CD4-positive, alpha-beta memory T cell (primary cell): ENCODE measurements at regions of chr10 and their contacts with region 1.

Region 1: DNA sequence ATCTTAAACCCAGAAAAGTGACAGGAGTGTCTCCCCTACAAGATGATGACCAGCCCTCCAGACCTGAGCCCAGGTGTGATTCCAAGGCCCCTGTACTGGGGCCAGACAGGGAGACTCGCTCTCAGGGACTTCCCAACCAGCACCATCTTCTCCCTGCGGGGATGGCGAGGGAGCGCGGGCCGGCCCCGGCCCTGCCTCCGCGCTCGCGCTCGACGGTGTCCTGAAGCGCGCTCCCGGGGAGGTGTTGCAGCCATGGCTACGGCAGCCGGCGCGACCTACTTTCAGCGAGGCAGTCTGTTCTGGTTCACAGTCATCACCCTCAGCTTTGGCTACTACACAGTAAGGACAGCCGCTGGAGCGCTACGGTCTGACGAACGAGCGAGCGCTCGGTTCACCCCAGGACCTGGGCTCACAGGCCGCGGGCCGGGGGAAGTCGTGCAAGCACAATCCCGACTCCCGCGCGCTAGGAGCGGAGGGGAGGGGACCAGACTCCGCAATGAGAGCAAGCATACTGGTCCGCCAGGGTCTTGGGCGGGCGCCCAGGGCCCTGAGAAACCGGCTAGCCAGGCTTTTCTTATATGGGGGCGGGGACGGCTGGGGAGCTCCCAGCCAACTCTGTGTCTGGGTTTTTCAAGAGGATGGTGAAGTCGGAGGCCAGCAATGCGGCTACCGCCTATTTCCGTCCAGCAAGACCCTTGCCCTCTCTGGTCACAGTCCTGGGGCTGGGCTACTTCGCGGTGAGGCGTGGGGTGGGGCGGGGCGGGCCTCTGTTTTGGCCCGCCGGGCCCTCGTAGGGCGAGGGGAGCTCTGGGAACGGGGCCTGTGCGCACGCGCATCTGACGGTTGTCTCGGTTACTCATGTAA is at the start of gene TMEM254:
- DNase-seq: peak; percentile 83 to 85 (median 85)
- H3K4me3 ChIP-seq: peak within 1 kb of the TSS; percentile 76 to 86
- H3K4me3 Mint-ChIP-seq: peak within 1 kb of the TSS; percentile 92 to 98 (median 96)
- H3K27ac ChIP-seq: peak within 1 kb of the TSS; percentile 83
- H3K27ac Mint-ChIP-seq: peak within 1 kb of the TSS; percentile 85 to 99 (median 98)
- H3K4me1 ChIP-seq: peaks cover 21% of the 10 kb centered on the region
- H3K4me1 Mint-ChIP-seq: peaks cover 13 to 30% (median 17%) of the 10 kb centered on the region in 4 donors
- H3K27me3 ChIP-seq: no peaks in the 10 kb centered on the region
- H3K27me3 Mint-ChIP-seq: no peaks in the 10 kb centered on the region
- total RNA-seq, gene TMEM254: 14.2 to 16.6 TPM

Region 2: DNA sequence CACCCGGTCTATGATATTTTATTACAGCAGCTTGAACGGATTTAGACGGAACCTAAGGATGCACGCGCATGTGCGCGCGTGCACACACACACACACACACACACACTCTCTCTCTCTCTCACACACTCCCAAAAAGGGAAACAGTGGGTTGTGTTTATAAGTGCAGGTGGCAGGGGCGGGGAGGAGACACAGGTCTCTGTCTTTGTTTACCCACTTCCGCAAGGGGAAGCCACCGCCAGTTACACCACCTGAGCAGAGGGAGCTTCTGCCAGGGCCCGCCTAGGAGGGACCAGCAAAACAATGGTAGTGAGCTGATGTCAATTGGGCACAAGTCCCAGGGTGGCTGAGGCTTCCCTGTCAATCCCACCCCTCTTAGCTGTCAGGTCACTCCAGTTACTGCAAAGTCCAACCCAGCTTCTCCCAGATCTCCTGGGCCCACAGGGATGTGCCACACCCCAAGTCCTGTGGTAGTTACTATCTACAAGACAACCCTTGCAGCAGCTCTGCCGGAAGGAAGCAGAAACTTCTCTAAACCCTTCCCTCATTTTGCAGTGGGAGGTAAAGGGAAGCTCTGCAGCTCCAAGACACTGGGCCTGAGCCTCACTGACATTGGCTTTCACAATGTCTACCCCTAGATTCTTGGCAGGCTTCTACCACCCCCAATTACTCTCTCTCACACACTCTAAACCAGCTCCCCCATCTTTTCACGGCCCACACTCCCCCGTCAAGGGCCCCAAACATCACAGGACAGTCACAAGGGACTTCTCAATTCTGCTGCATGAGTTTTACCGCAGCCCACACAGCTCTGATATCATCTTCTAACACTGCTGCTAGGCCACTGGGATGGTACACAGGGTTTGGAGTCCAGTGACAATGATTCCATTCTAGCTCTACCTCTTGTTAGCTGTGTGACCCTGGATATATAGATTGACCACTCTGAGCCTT is 109.1 kb after region 1 on chr10:
- CTCF ChIA-PET with region 1: interaction called, 3 read pairs
- POLR2A ChIA-PET with region 1: interaction called, 14 read pairs
- intact Hi-C with region 1: loop called (anchors 1 kb)
- DNase-seq: peak; percentile 88 to 94 (median 93)
- H3K4me3 ChIP-seq: peak overlapping the region; percentile 18 to 24
- H3K4me3 Mint-ChIP-seq: peak overlapping the region; percentile 78 to 92 (median 82)
- H3K27ac ChIP-seq: peak overlapping the region; percentile 59
- H3K27ac Mint-ChIP-seq: peak overlapping the region; percentile 88 to 97 (median 94)
- H3K4me1 ChIP-seq: peaks cover 91% of the 10 kb centered on the region
- H3K4me1 Mint-ChIP-seq: peaks cover 56 to 90% (median 77%) of the 10 kb centered on the region in 4 donors
- H3K27me3 ChIP-seq: no peaks in the 10 kb centered on the region
- H3K27me3 Mint-ChIP-seq: no peaks in the 10 kb centered on the region

Region 3: DNA sequence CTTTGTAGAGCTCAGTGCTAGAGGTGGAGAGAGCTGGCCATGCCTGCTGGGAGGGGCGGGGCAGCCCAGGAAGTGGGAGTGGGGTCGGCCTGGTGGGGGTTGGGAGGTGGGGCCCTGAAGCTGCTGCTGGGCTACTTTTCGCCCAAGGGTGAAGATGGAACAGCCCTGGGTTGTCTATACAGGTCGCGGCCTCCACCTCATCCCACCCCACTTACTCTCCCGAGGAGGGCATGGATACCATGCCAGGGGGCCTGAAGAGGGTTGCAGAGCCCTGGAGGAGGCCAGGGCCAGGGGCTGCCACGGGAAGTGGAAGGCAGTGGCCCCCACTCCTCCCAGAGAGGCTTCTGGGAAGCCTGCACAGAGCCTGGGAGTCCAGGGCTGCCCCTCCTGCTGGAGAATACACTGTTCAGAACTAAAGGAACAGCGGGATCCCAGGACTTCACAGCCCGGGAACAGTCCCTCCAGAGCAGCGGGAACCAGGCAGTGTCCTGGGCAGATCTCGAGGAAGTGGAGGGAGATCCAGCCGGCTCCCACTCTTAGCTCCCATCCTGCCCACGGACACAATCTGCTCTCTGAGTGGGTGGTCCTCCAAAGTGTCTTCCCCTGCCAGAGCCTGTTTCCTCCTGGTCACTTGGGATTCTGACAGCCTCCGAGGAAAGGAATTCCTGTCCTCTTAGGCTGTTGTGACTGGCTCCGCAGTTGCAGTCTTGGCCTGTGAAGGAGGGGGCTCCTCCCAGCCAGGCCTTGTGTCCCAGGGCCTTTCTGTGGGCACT is 187.2 kb after region 1 on chr10:
- CTCF ChIA-PET with region 1: no interaction called
- POLR2A ChIA-PET with region 1: no interaction called
- intact Hi-C with region 1: no loop called
- DNase-seq: no peak
- H3K4me3 ChIP-seq: no peak overlapping the region
- H3K4me3 Mint-ChIP-seq: no peak overlapping the region
- H3K27ac ChIP-seq: no peak overlapping the region
- H3K27ac Mint-ChIP-seq: no peak overlapping the region
- H3K4me1 ChIP-seq: no peaks in the 10 kb centered on the region
- H3K4me1 Mint-ChIP-seq: no peaks in the 10 kb centered on the region
- H3K27me3 ChIP-seq: no peaks in the 10 kb centered on the region
- H3K27me3 Mint-ChIP-seq: peaks cover 7 to 15% of the 10 kb centered on the region in 2 donors